ENCODE measurements at regions of chr11 and their contacts with region 1.

Region 1: GRCh38 chr11:97772705-97773104 is 1248.0 kb upstream of the CNTN5 start:
- DNase-seq: no peak
- ATAC-seq: no peak
- H3K4me3 Mint-ChIP-seq: no peak overlapping the region
- H3K27ac Mint-ChIP-seq: no peak overlapping the region
- H3K4me1 Mint-ChIP-seq: no peaks in the 10 kb centered on the region
- H3K27me3 Mint-ChIP-seq: no peaks in the 10 kb centered on the region

Region 2: GRCh38 chr11:97814325-97814959 is 41.7 kb after region 1 on chr11:
- CTCF ChIA-PET with region 1: no interaction called
- POLR2A ChIA-PET with region 1: no interaction called
- intact Hi-C with region 1: loop called in 1 of 2 experiments (anchors 5 kb)
- DNase-seq: no peak
- ATAC-seq: no peak
- H3K4me3 Mint-ChIP-seq: no peak overlapping the region
- H3K27ac Mint-ChIP-seq: no peak overlapping the region
- H3K4me1 Mint-ChIP-seq: no peaks in the 10 kb centered on the region
- H3K27me3 Mint-ChIP-seq: no peaks in the 10 kb centered on the region